ENCODE measurements at regions of chr13 and their contacts with region 1.

Region 1: DNA sequence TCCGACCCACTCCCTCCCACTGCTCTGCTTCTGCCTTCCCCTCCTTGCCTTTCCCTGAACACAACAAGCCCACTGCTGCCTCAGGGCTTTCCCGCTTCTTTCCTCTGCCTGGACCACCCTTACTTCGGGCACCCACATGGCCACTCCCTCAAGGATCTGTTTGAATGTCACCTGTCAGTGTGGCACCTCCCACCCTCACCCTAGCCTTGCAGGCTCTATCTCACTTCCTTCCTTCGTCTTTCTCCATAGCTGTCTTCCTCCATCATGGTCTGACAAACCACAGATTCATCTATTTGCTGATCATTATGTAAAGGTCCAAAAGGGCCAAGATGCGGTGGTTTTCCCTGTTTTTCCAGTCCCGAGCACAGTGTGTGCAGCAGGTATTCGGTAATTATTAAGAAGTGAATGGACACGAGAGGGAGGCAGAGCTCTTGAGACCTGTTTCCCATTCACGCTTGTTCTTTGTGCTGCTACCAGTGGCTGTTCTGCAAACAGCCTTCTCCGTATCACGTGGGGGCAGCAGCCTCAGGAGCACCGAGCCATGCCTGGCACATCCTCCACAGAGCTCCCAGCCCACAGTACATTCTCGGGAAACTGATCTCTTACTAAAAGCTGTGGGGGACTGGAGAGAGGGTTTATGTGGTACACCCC is 50.2 kb downstream of the CCDC70 start:
- DNase-seq: peak; percentile 23
- H3K4me3 ChIP-seq: no peak overlapping the region
- H3K27ac ChIP-seq: no peak overlapping the region
- H3K4me1 ChIP-seq: peaks cover 27% of the 10 kb centered on the region
- CTCF ChIP-seq: no peak; the same call in 1 of the 2 replicates

Region 2: GRCh38 chr13:51885651-51886050 is 26.3 kb before region 1 on chr13:
- CTCF ChIA-PET with region 1: no interaction called
- POLR2A ChIA-PET with region 1: no interaction called
- intact Hi-C with region 1: no loop called
- DNase-seq: no peak
- H3K4me3 ChIP-seq: no peak overlapping the region
- H3K27ac ChIP-seq: no peak overlapping the region
- H3K4me1 ChIP-seq: no peaks in the 10 kb centered on the region
- CTCF ChIP-seq: no peak

Region 3: DNA sequence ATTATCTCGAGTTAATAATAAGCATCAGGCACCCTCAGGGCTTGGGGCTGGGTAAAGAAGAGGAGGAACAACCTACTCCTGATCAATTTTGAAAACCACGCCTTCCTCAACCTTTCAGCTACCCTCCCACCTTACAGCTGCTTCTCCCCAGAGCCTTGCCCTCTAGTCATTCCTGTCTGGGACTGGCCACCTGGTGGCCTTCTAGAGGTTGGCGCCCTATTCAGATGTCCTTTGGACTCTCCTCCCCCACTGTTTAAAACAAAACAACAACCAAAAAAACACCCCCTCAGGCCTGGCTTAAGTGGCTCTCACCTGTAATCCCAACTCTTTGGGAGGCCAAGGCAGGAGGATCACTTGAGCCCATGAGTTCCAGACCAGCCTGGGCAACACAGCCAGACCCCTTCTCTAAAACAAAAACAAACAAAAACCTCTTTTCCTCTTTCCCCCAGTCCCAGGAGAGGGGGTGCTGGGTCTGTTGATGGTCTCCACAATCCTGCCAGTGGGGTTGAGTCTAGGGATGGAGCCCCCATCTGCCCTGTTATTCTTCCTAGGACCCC is 12.1 kb after region 1 on chr13:
- CTCF ChIA-PET with region 1: interaction called, 4 read pairs
- POLR2A ChIA-PET with region 1: interaction called, 20 read pairs
- intact Hi-C with region 1: no loop called
- DNase-seq: no peak
- H3K4me3 ChIP-seq: no peak overlapping the region
- H3K27ac ChIP-seq: no peak overlapping the region
- H3K4me1 ChIP-seq: peaks cover 21% of the 10 kb centered on the region
- CTCF ChIP-seq: no peak

Measured in OCI-LY7 (cell line).